ENCODE measurements at regions of chr7 and their contacts with region 1.

Region 1: DNA sequence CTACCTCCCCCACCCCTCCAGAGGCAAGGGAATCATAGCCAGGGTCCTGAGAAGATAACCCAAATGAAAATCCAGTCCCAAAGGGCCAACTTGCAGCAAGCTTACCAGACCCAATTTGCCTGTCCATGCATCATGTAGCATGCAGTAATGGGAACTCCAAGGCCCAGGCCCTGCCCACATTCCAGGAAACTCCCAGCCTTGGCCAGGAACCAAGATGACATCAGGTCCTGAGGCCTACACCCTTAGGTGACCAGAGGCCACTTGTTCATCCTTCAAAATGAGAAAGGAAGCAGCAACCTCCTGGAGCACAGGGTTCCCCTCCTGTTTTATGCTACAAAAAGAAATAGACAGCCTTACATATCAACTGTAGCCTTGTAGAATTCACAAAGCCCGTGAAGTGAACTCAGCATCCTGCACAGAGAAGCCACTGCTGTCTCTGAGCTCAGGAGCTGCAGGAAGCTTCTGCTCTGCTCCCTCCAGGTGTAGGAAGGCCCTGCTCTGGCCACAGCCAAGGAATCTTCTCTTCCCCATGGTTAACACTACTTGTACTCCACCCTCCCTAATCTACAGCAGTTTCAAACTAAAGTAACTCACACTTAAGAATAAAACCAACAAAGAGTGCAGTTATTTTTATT is 30.3 kb upstream of the GRB10 start:
- DNase-seq: peak; percentile 78
- ATAC-seq: peak; percentile 91
- H3K4me3 ChIP-seq: no peak overlapping the region
- H3K27ac ChIP-seq: no peak overlapping the region
- H3K4me1 ChIP-seq: no peaks in the 10 kb centered on the region
- H3K27me3 ChIP-seq: no peaks in the 10 kb centered on the region
- CTCF ChIP-seq: no peak

Region 2: GRCh38 chr7:51141451-51142003 is 328.6 kb after region 1 on chr7:
- intact Hi-C with region 1: loop called (anchors 10 kb)
- DNase-seq: no peak
- ATAC-seq: peak; percentile 38
- H3K4me3 ChIP-seq: no peak overlapping the region
- H3K27ac ChIP-seq: no peak overlapping the region
- H3K4me1 ChIP-seq: peaks cover 11% of the 10 kb centered on the region
- H3K27me3 ChIP-seq: no peaks in the 10 kb centered on the region
- CTCF ChIP-seq: peak; percentile 51